ENCODE measurements at regions of chr17 and their contacts with region 1.

Region 1: DNA sequence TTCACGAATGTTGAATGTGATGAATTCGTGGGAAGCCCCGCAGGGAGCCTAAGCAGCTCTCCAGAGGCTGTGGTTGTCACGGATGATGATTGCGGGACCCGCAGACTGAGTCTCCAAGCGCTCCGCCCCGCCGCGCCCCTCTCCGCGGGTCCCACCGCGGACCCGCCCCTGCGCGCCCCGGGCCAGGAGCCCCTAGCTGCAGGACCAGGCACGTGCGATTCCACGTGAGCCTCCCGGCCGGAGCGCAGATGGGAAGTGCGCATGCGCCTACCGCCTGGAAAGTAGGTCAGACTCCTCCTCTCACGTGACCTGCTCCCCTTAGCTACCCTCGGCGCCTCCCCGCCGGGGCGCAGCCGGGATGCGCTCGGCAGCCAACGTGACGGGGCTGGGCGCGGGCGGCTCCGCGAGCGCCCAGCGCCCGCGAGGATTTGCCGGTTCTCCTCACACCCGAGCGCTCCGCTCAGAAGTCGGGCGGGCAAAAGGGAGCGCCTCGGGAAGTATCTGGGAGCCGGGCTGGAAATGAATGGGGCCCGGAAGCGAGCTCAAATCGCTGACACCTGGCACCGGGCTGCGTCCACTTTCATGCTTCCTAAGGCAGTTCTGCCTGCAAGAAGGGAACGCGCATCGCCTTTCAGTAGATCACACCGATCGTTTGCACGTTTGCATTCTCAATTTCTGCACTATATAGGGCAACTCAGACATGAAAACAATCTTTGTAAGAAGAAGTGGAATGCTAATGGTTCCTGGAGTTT is 26.4 kb upstream of the HLF start:
- DNase-seq: peak; percentile 63 to 77
- H3K4me3 ChIP-seq: peak overlapping the region; percentile 67
- H3K27ac ChIP-seq: no peak overlapping the region
- H3K4me1 ChIP-seq: peaks cover 9% of the 10 kb centered on the region
- H3K27me3 ChIP-seq: peaks cover 11% of the 10 kb centered on the region; the same call in 1 of the 2 replicates
- CTCF ChIP-seq: no peak

Region 2: GRCh38 chr17:55177159-55177854 is 61.0 kb before region 1 on chr17:
- CTCF ChIA-PET with region 1: no interaction called
- POLR2A ChIA-PET with region 1: no interaction called
- intact Hi-C with region 1: loop called (anchors 5 kb)
- DNase-seq: no peak
- H3K4me3 ChIP-seq: no peak overlapping the region
- H3K27ac ChIP-seq: no peak overlapping the region
- H3K4me1 ChIP-seq: no peaks in the 10 kb centered on the region
- H3K27me3 ChIP-seq: no peaks in the 10 kb centered on the region
- CTCF ChIP-seq: no peak

Region 3: GRCh38 chr17:55198690-55199370 is 39.5 kb before region 1 on chr17:
- CTCF ChIA-PET with region 1: no interaction called
- POLR2A ChIA-PET with region 1: no interaction called
- intact Hi-C with region 1: no loop called
- DNase-seq: no peak
- H3K4me3 ChIP-seq: no peak overlapping the region
- H3K27ac ChIP-seq: no peak overlapping the region
- H3K4me1 ChIP-seq: no peaks in the 10 kb centered on the region
- H3K27me3 ChIP-seq: no peaks in the 10 kb centered on the region
- CTCF ChIP-seq: no peak

Measured in PC-9 (cell line).